PC-9 (cell line): ENCODE measurements at regions of chr19 and their contacts with region 1.

Region 1: DNA sequence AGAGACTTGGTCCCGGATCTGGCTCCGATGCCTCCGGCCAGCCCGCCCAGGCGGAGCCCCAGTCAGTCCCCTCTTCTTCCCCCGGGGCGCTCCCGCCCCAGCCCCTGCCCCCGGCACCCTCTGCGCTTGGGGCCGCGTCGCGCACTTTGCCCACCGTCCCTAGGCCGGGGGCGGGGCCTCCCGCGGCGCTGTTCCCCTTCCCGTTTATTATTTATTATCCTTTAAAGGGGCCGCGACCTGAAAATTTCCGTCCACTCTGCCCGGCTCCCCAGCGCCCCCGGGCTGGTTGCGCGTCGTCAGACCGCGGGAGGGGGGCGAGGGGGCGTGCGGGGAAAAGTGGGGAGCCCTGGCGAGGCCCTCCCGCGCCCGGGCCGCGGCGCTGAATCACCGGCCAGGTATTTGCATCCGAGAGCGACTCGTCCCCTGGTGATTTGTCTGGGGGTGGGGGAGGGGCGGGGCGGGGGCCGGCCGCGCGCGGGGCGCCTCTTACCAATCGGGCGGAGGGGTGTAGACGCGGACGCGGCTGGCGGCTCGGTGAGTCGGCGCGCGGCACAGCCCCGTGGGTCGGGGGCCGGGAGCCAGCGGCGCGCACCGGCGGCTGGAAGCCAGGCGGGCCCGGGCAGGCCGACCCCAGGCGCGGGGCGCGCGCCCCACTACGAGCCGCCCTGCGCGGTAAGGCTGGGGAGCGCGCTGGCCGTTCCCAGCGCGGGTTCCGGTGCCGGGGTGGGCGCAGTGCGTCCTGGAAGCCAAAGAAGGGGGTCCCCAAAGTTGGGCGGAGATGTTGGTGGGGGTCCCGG is at the start of gene ARID3A:
- DNase-seq: peak; percentile 53 to 80
- H3K4me3 ChIP-seq: peak within 1 kb of the TSS; percentile 77
- H3K27ac ChIP-seq: no peak within 1 kb of the TSS
- H3K4me1 ChIP-seq: no peaks in the 10 kb centered on the region; the same call in 1 of the 2 replicates
- H3K27me3 ChIP-seq: no peaks in the 10 kb centered on the region; the same call in 1 of the 2 replicates
- CTCF ChIP-seq: no peak
- total RNA-seq, gene ARID3A: 9.2 and 10.7 TPM in 2 replicates

Region 2: DNA sequence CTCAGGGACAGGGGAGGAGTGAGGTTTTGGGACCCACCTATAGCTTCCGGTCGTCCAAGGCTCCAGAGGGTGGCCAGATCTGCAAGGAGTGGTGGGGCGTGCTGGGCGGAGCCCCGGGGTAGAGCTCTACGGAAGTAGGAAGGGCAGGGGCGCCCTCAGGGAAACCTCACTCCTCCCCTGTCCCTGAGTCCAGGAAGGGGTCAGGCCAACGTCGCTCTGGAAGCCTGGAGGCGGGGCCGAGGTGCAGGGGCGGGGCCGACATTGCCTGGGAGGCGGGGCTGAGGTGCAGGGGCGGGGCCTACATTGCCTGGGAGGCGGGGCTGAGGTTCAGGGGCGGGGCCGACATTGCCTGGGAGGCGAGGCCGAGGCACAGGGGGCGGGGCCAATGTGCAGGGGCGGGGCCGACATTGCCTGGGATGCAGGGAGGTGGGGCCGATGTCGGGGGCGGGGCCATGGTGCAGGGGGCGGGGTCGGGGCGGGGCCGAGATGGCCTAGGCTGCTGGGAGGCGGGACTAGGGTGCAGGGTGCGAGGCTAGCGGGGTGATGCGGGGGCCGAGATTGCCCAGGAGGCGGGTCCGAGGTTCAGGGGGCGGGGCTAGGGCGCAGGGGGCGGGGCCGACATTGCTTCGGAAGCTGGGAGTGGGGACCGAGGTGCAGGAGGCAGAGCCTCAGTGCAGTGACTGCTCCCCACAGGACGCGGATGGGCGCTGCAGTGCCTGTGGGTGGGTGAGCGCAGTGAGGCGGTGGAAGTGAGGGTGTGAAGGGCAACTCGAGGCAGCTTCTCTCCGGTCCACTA is 221.9 kb before region 1 on chr19:
- CTCF ChIA-PET with region 1: no interaction called
- POLR2A ChIA-PET with region 1: no interaction called
- intact Hi-C with region 1: no loop called
- DNase-seq: peak; percentile 43 to 62
- H3K4me3 ChIP-seq: no peak overlapping the region; the same call in 1 of the 2 replicates
- H3K27ac ChIP-seq: no peak overlapping the region
- H3K4me1 ChIP-seq: no peaks in the 10 kb centered on the region
- H3K27me3 ChIP-seq: no peaks in the 10 kb centered on the region
- CTCF ChIP-seq: no peak

Region 3: DNA sequence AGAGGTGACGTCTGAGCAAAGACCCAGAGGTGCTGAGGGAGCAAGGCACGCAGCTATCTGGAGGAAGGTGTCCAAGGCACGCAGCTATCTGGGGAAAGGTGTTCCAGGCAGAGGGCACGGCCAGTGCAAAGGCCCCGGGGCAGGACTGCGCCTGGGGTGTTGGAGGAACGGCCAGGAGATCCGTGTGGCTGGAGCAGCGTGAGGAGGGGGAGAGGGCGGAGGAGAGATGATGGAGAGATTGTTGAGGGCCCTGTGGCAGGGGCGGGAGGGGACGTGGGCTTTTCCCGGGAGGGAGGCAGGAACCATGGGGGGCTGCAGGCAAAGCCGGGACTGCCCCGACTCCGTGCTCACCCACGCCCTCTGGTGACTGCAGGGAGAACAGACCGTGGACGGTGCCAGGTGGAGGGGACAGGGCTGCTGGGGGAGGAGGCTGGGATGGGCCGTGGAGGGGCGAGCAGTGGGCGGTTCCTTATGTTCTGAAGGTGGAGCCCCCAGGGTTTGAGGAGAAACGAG is 188.1 kb before region 1 on chr19:
- CTCF ChIA-PET with region 1: no interaction called
- POLR2A ChIA-PET with region 1: no interaction called
- intact Hi-C with region 1: no loop called
- DNase-seq: peak in 1 of 2 experiments; percentile 51
- H3K4me3 ChIP-seq: no peak overlapping the region
- H3K27ac ChIP-seq: no peak overlapping the region
- H3K4me1 ChIP-seq: no peaks in the 10 kb centered on the region
- H3K27me3 ChIP-seq: no peaks in the 10 kb centered on the region
- CTCF ChIP-seq: peak; percentile 72

Region 4: DNA sequence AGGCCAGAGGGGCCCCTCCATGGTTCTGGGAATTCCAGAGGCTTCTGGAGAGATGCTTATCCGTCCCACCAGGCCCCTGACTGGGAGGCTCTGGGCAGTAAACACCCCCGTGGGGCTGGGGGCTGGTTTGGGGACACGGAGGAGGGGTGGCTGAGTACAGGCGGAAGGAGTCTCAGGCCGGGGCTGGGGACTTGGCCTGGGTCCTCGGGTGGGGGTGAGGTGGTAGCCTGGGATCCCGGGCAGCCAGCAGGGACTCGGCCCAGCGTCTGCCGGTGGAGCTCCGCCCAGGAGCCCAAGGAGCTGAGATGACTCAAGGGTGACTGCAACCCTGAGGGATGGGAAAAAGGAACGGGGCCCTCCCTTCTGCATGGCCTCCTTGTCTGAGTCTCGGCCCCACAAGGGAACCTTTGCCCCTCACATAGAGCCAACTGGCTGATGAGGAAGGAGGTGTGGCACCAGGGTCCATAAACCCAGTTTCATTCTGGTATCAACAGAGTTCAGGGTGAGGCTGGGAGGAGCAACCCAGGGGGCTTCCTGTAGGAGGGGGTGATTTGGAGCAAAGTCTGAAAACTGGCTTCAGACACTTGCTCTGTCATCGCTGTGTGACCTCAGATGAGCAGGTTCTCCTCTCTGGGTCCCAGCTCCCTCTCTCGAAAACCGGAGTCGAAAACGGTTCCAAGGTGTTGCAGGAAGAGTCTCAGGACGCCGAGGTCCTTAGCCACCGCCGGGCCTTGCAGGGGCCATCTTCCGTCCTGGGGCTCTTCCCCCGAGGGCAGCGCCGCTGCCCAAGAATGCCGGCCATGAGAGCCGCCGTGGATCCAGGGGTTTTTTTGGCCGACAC is 174.0 kb before region 1 on chr19:
- CTCF ChIA-PET with region 1: no interaction called
- POLR2A ChIA-PET with region 1: no interaction called
- intact Hi-C with region 1: no loop called
- DNase-seq: peak; percentile 77 to 80
- H3K4me3 ChIP-seq: peak overlapping the region; percentile 99
- H3K27ac ChIP-seq: peak overlapping the region; percentile 89
- H3K4me1 ChIP-seq: peaks cover 22% of the 10 kb centered on the region
- H3K27me3 ChIP-seq: no peaks in the 10 kb centered on the region
- CTCF ChIP-seq: no peak

Region 5: DNA sequence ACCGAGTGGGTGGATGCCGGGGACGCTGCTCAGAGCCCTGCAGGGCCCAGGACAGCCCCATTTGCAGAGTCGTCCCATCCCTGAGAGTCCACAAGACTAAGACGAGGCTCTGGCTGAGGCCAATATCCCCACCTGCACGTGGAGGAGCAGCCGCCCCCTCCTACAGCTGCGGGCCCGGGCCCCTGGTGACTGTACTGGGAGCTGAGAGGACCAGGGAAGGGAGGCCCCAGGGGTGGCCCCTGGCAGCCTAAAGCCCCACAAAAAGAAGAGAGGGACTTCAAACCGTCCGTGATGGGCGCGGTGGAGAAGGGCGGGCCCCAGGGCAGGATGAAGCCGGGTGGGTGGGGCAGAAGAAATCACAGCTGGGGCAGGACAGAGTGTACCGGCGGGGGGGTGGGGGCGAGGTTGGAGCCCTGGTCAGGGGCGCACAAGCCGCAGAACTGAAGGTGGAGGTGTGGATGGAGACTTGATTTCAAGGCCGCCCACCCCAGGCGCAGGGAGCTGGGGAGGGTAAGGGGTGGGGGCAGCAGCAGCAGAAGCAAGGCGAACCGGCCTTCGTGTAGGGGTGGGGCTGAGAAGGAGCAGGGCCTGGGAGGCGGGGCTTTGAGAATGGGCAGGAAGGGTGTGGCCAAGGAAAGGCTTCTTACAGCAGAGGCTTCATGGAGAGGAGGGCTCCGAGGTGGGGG is 53.3 kb before region 1 on chr19:
- CTCF ChIA-PET with region 1: no interaction called
- POLR2A ChIA-PET with region 1: no interaction called
- intact Hi-C with region 1: no loop called
- DNase-seq: peak; percentile 72 to 86
- H3K4me3 ChIP-seq: no peak overlapping the region
- H3K27ac ChIP-seq: no peak overlapping the region
- H3K4me1 ChIP-seq: peaks cover 29% of the 10 kb centered on the region
- H3K27me3 ChIP-seq: no peaks in the 10 kb centered on the region
- CTCF ChIP-seq: no peak

Region 6: DNA sequence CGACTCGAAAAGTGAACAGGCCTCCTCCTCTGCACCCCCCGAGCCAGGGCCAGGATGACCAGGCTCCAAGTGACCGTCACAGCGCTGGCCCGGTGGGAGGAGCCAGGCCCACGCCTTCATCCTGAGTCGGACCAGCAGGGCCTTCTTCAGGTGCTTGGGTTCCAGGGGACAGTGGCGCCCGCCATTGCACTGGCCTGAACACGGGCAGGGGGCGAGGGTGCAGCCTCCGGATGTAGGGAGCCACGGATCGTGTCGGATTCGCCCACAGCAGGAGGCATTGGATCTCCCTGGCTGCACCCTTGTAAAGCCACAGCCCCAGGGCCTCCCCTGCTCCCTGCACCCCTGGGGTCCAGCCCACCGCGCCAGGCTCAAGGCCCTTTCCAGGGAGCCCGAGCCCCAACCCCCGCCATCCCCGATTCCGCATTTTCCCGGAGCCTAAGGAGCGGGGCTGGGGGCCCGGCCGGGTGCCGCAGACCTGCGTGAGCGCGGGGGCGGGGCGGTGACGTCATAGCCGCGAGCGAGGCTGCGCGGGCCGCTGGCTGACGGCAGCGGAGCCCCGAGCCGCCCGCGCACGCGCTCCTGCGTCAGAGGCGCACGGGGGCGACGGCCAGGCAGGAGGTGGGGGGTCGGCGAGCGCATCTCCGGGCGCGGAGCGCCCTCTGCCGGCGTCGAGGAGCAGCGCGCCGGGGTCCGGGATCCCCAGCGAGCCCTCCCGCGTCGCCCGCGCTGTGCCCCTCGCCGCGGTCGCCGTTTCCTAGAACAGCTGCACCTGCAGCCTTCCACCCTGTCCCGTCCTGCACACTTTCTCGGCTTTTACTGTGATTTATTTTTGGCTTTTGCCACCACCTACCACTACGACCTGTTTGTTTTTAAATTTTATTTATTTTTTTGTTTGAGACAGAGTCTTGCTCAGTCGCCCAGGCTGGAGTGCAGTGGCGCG is 314.3 kb after region 1 on chr19:
- CTCF ChIA-PET with region 1: no interaction called
- POLR2A ChIA-PET with region 1: no interaction called
- intact Hi-C with region 1: loop called (anchors 1 kb)
- DNase-seq: peak; percentile 43 to 85
- H3K4me3 ChIP-seq: peak overlapping the region; percentile 73
- H3K27ac ChIP-seq: no peak overlapping the region
- H3K4me1 ChIP-seq: peaks cover 23% of the 10 kb centered on the region
- H3K27me3 ChIP-seq: no peaks in the 10 kb centered on the region
- CTCF ChIP-seq: peak; percentile 53